ENCODE measurements at regions of chr11 and their contacts with region 1.

Region 1: DNA sequence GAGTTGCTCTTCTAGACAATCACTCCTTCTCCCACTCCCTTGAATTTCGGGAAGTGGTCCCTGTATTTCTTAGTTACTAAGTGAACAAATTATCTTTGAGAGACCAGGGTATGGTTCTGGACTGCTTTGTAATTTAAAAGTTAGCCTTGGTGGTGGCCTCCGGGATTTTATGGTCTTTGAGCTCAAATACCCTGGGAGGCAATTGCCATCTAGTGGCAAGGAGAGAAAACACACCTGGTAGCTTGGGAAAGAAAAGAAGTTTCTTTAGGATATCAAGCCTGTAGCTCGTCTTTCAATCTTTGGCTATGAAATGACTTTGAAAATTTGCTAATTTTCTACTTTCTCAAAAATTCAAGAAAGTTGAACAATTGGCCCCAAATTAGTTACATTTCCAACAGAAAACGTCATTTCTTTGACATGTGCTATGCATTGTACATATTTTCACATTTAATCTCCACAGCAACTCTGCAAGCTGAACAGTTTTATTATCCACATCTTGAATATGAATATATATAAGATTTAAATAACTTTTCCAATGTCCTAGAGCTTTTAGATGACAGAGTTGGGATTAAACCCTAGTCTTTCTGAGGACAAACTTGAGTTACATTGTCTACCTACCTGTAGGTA is 39.1 kb downstream of the MMP27 start:
- DNase-seq: peak; percentile 55
- ATAC-seq: peak; percentile 36
- H3K4me3 ChIP-seq: no peak overlapping the region
- H3K4me3 Mint-ChIP-seq: no peak overlapping the region
- H3K27ac ChIP-seq: no peak overlapping the region
- H3K27ac Mint-ChIP-seq: no peak overlapping the region
- H3K4me1 ChIP-seq: peaks cover 0 to 5% of the 10 kb centered on the region in 2 donors
- H3K4me1 Mint-ChIP-seq: no peaks in the 10 kb centered on the region
- H3K27me3 ChIP-seq: no peaks in the 10 kb centered on the region
- H3K27me3 Mint-ChIP-seq: peaks cover 3% of the 10 kb centered on the region
- CTCF ChIP-seq: peak; percentile 82

Region 2: DNA sequence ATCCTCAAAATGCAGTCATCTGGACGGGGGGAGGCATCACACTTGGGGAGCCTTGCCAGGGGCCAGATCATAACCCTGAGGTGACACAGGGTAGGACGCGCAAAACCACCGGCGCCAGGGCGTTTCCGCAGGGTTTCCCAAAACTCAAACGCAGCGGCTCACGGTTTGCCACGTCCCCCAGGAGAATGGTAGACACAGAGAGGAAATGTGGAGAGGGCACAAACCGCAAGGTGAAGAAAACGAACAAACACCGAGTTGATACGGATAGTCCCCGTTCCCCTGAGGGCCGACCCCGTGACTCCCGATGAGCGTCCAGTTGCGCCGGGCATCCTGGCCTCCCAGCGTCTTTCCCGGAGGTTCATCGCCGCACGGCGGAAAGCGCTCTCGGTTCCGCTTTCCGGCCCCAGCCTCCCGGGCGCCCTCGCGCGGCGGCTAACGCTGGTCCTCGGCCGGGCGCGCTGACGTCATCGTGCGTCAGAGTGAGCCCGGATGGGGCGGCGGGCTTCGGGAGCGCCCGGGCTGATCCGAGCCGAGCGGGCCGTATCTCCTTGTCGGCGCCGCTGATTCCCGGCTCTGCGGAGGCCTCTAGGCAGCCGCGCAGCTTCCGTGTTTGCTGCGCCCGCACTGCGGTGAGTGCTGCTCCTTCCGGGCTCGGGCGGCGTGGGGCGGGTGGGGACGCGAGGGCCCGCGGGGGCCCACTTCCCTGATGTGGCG is 319.5 kb before region 1 on chr11 and contains the start of gene BIRC2:
- CTCF ChIA-PET with region 1: interaction called, 67 read pairs
- POLR2A ChIA-PET with region 1: no interaction called
- intact Hi-C with region 1: no loop called
- DNase-seq: peak; percentile 98
- ATAC-seq: peak; percentile 88
- H3K4me3 ChIP-seq: peak within 1 kb of the TSS; percentile 63 to 98 (median 92)
- H3K4me3 Mint-ChIP-seq: peak within 1 kb of the TSS; percentile 90
- H3K27ac ChIP-seq: peak within 1 kb of the TSS; percentile 94 to 97
- H3K27ac Mint-ChIP-seq: peak within 1 kb of the TSS; percentile 98
- H3K4me1 ChIP-seq: peaks cover 14 to 21% of the 10 kb centered on the region in 2 donors
- H3K4me1 Mint-ChIP-seq: peaks cover 36% of the 10 kb centered on the region
- H3K27me3 ChIP-seq: no peaks in the 10 kb centered on the region
- H3K27me3 Mint-ChIP-seq: no peaks in the 10 kb centered on the region
- CTCF ChIP-seq: peak; percentile 73
- total RNA-seq, gene BIRC2: 46.7 and 51.0 TPM in 2 replicates

Region 3: GRCh38 chr11:102367364-102367763 is 299.1 kb before region 1 on chr11:
- CTCF ChIA-PET with region 1: interaction called, 24 read pairs
- POLR2A ChIA-PET with region 1: no interaction called
- intact Hi-C with region 1: no loop called
- DNase-seq: peak; percentile 47
- ATAC-seq: no peak
- H3K4me3 ChIP-seq: no peak overlapping the region
- H3K4me3 Mint-ChIP-seq: no peak overlapping the region
- H3K27ac ChIP-seq: peak overlapping the region in 1 of 2 donors; percentile 48
- H3K27ac Mint-ChIP-seq: peak overlapping the region; percentile 1
- H3K4me1 ChIP-seq: no peaks in the 10 kb centered on the region
- H3K4me1 Mint-ChIP-seq: peaks cover 16% of the 10 kb centered on the region
- H3K27me3 ChIP-seq: no peaks in the 10 kb centered on the region
- H3K27me3 Mint-ChIP-seq: no peaks in the 10 kb centered on the region
- CTCF ChIP-seq: peak; percentile 61

Region 4: GRCh38 chr11:102981324-102981910 is 315.0 kb after region 1 on chr11:
- CTCF ChIA-PET with region 1: no interaction called
- POLR2A ChIA-PET with region 1: no interaction called
- intact Hi-C with region 1: no loop called
- DNase-seq: no peak
- ATAC-seq: no peak
- H3K4me3 ChIP-seq: no peak overlapping the region
- H3K4me3 Mint-ChIP-seq: no peak overlapping the region
- H3K27ac ChIP-seq: no peak overlapping the region
- H3K27ac Mint-ChIP-seq: no peak overlapping the region
- H3K4me1 ChIP-seq: no peaks in the 10 kb centered on the region
- H3K4me1 Mint-ChIP-seq: no peaks in the 10 kb centered on the region
- H3K27me3 ChIP-seq: no peaks in the 10 kb centered on the region
- H3K27me3 Mint-ChIP-seq: no peaks in the 10 kb centered on the region
- CTCF ChIP-seq: no peak

Measured in B cell (primary cell).